ENCODE measurements at regions of chr2 and their contacts with region 1.

Region 1: GRCh38 chr2:28452534-28453081 is 43.3 kb upstream of the PLB1 start:
- DNase-seq: peak; percentile 27
- ATAC-seq: peak; percentile 84
- H3K4me3 ChIP-seq: no peak overlapping the region
- H3K27ac ChIP-seq: no peak overlapping the region
- H3K4me1 ChIP-seq: peaks cover 19% of the 10 kb centered on the region
- H3K27me3 ChIP-seq: no peaks in the 10 kb centered on the region
- CTCF ChIP-seq: peak; percentile 90
- POLR2A ChIP-seq: no peak
- RAD21 ChIP-seq: peak; percentile 92

Region 2: DNA sequence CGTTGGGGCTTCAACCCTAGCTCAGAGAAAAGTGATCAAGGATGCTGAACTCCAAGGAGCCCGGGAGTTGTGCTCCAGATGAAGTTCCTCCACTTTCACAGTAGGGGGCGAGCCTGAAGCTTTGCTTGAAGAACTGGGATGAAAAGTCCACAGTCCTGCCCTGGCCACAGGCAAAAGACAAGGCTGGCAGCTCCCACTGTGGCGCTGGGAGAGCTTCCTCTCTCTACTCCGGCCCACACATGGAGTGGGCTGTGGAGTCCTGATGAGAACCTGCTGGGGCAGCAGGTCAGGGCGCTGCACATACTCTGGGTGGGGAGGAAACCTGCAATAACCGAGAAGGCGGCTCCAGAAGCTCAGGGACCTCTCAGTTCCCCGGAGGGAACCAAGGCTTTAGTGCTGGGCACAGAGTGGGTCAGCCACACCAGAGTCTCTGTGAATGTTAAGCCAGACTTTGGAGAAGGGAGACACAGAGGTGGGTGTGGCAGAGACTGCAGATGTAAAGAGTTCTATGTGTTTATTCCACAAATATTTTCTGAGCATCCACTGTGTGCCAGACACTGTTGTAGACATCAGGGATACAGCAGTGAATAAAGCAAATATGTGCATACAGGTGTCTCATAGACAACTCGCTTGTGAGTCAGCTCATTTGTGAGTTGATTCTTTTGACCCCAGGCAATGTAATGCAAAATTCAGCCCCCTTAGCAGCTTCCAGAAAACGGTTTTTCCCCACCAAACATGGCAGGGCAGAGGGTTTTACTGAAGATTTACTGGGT is 729.0 kb before region 1 on chr2:
- CTCF ChIA-PET with region 1: interaction called, 5 read pairs
- POLR2A ChIA-PET with region 1: no interaction called
- dilution Hi-C with region 1: no loop called
- in situ Hi-C with region 1: no loop called
- intact Hi-C with region 1: loop called (anchors 5 kb)
- DNase-seq: peak; percentile 75
- ATAC-seq: peak; percentile 84
- H3K4me3 ChIP-seq: no peak overlapping the region
- H3K27ac ChIP-seq: no peak overlapping the region
- H3K4me1 ChIP-seq: peaks cover 12% of the 10 kb centered on the region
- H3K27me3 ChIP-seq: no peaks in the 10 kb centered on the region
- CTCF ChIP-seq: peak; percentile 77
- POLR2A ChIP-seq: no peak
- RAD21 ChIP-seq: peak; percentile 76

Region 3: GRCh38 chr2:28286678-28287077 is 165.9 kb before region 1 on chr2:
- CTCF ChIA-PET with region 1: no interaction called
- POLR2A ChIA-PET with region 1: no interaction called
- dilution Hi-C with region 1: no loop called
- in situ Hi-C with region 1: no loop called
- intact Hi-C with region 1: no loop called
- DNase-seq: peak; percentile 60
- ATAC-seq: peak; percentile 92
- H3K4me3 ChIP-seq: no peak overlapping the region
- H3K27ac ChIP-seq: peak overlapping the region; percentile 77
- H3K4me1 ChIP-seq: peaks cover 13% of the 10 kb centered on the region
- H3K27me3 ChIP-seq: no peaks in the 10 kb centered on the region
- CTCF ChIP-seq: no peak
- POLR2A ChIP-seq: no peak
- RAD21 ChIP-seq: no peak

Region 4: DNA sequence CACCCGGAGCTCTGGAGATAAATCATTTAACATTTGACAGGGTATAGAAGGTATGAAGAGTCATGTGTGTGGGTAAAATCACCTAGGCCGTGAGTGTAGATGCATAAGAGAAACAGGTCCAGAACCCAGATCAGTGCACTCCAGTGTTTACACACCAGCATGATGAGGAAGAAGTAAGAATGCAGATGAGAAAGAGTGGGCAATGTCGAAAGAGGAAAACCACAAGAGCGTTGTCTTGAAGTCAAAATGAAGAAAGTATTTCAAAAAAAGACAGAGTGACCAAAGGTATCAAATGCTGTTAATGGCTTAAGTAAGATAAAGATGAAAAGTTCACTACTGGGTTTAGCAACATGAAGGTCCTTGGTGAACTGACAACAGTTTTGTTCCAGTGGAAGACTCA is 11.3 kb after region 1 on chr2:
- CTCF ChIA-PET with region 1: no interaction called
- POLR2A ChIA-PET with region 1: no interaction called
- dilution Hi-C with region 1: no loop called
- in situ Hi-C with region 1: no loop called
- intact Hi-C with region 1: no loop called
- DNase-seq: peak; percentile 61
- ATAC-seq: peak; percentile 29; the same call in 1 of the 2 replicates
- H3K4me3 ChIP-seq: no peak overlapping the region
- H3K27ac ChIP-seq: no peak overlapping the region
- H3K4me1 ChIP-seq: no peaks in the 10 kb centered on the region
- H3K27me3 ChIP-seq: peaks cover 10% of the 10 kb centered on the region
- CTCF ChIP-seq: no peak
- POLR2A ChIP-seq: no peak
- RAD21 ChIP-seq: no peak

Region 5: DNA sequence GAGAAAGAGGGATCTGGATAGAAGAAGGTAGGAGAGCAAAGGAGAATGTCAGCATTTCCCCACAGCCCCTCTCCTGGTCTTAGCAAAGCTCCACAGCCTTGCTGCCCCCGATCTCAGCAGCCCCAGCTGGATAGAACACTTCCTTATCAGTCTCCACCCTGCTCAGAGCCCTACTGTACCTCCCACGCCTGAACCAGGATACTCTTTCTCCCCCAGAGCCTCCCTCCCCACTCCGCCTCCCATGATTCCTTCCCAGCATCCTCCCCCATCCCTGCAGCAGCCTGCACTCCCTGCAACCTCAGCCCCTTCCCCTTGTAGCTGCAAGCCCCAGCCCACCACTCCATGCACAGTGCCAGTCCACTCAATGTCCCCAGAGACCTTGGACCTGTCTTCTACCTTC is 69.1 kb after region 1 on chr2:
- CTCF ChIA-PET with region 1: no interaction called
- POLR2A ChIA-PET with region 1: no interaction called
- dilution Hi-C with region 1: no loop called
- in situ Hi-C with region 1: no loop called
- intact Hi-C with region 1: no loop called
- DNase-seq: no peak
- ATAC-seq: no peak
- H3K4me3 ChIP-seq: no peak overlapping the region
- H3K27ac ChIP-seq: no peak overlapping the region
- H3K4me1 ChIP-seq: no peaks in the 10 kb centered on the region
- H3K27me3 ChIP-seq: peaks cover 72% of the 10 kb centered on the region
- CTCF ChIP-seq: no peak
- POLR2A ChIP-seq: no peak
- RAD21 ChIP-seq: no peak

Region 6: DNA sequence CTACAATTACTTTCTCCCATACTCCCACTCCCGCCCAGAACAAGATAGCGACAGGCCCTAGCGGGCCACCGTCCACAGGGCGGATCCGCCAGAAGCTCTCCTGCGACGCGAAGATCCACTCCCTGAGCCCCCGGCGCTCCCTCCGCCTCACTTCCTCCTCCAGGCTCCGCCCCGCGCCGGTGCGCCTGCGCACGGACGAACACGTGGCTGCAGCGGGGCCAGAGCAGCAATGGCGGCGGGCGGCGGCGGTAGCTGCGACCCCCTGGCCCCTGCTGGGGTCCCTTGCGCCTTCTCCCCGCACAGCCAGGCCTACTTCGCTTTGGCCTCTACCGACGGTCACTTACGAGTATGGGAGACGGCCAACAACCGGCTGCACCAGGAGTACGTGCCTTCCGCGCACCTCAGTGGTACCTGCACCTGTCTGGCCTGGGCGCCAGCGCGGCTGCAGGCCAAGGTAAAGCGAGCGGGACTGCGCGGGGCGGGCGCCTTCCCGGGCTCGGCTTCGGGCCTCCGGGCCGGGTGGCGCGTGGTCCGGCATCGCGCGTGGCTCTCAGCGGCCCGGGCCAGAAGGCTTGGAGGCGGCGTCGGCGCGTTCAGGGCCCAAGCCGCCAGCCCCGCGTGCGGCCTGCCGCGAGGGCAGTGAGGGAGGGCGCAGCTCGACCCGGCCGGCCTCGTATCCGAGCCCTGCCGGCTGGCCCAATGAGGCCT is 442.0 kb after region 1 on chr2 and contains the start of gene WDR43:
- CTCF ChIA-PET with region 1: no interaction called
- POLR2A ChIA-PET with region 1: interaction called, 11 read pairs
- dilution Hi-C with region 1: no loop called
- in situ Hi-C with region 1: no loop called
- intact Hi-C with region 1: no loop called
- DNase-seq: peak; percentile 99
- ATAC-seq: peak; percentile 97
- H3K4me3 ChIP-seq: peak within 1 kb of the TSS; percentile 88
- H3K27ac ChIP-seq: peak within 1 kb of the TSS; percentile 88
- H3K4me1 ChIP-seq: peaks cover 2% of the 10 kb centered on the region; the same call in 1 of the 2 replicates
- H3K27me3 ChIP-seq: no peaks in the 10 kb centered on the region
- CTCF ChIP-seq: no peak
- POLR2A ChIP-seq: peak; percentile 85
- RAD21 ChIP-seq: no peak
- total RNA-seq, gene WDR43: 220 and 300 TPM in 2 replicates

Region 7: GRCh38 chr2:29097569-29097968 is 645.0 kb after region 1 on chr2:
- CTCF ChIA-PET with region 1: no interaction called
- POLR2A ChIA-PET with region 1: no interaction called
- dilution Hi-C with region 1: no loop called
- in situ Hi-C with region 1: no loop called
- intact Hi-C with region 1: no loop called
- DNase-seq: no peak
- ATAC-seq: no peak
- H3K4me3 ChIP-seq: no peak overlapping the region
- H3K27ac ChIP-seq: no peak overlapping the region
- H3K4me1 ChIP-seq: no peaks in the 10 kb centered on the region
- H3K27me3 ChIP-seq: no peaks in the 10 kb centered on the region; the same call in none of the 2 replicates
- CTCF ChIP-seq: no peak
- POLR2A ChIP-seq: no peak
- RAD21 ChIP-seq: no peak

Measured in IMR-90 (cell line).